ENCODE measurements at regions of chr13 and their contacts with region 1.

Region 1: DNA sequence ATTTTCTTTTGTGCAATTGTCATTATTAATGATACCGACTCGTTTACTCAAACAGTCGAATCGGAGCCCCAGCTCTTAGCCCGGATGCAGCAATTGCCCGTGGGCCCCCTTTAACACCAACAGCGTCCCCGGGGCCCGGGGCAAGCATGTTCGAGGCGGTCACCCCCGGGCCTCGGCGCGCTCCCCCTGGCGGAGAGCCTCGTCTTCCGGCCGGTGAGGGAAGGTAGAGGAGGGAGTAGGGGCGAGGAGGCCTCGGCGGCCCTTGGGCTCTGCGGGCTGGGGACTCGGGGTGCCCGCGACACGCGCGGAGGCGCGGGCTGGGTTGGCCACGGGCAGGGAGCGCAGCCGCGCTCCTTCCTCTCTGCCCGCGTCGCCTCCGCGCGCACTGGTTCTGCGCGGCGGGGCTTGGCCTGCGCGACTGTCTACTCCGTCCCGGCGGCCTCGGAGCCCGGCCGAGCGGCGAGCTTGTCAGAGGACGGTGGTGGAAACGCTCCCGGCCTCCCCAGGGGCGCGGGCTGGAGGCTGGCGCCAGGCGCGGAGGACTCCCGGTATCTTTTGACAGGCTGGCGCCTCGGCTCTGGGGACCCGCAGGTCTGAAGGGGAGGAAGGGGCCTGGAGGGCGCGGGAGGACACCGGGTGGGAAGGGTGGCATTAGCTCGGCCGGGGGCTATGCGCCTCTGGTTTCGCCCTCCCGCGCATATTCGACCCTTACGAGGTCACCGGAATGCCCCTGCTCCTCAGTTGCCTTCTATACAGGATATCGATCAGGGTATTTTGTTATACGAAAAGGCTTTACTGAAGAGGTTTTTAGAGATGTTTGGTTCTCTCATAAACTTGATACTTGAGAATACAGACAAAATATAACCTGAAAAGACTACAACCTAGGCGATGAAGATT is 1.5 kb downstream of the BIVM start:
- DNase-seq: peak; percentile 59 to 81
- H3K4me3 ChIP-seq: peak overlapping the region; percentile 87
- H3K27ac ChIP-seq: no peak overlapping the region
- H3K4me1 ChIP-seq: peaks cover 15% of the 10 kb centered on the region; the same call in 1 of the 2 replicates
- H3K27me3 ChIP-seq: no peaks in the 10 kb centered on the region
- CTCF ChIP-seq: peak; percentile 82

Region 2: GRCh38 chr13:102538938-102539337 is 261.5 kb before region 1 on chr13:
- CTCF ChIA-PET with region 1: no interaction called
- POLR2A ChIA-PET with region 1: no interaction called
- intact Hi-C with region 1: no loop called
- DNase-seq: no peak
- H3K4me3 ChIP-seq: no peak overlapping the region
- H3K27ac ChIP-seq: no peak overlapping the region
- H3K4me1 ChIP-seq: no peaks in the 10 kb centered on the region
- H3K27me3 ChIP-seq: peaks cover 72% of the 10 kb centered on the region
- CTCF ChIP-seq: no peak

Region 3: DNA sequence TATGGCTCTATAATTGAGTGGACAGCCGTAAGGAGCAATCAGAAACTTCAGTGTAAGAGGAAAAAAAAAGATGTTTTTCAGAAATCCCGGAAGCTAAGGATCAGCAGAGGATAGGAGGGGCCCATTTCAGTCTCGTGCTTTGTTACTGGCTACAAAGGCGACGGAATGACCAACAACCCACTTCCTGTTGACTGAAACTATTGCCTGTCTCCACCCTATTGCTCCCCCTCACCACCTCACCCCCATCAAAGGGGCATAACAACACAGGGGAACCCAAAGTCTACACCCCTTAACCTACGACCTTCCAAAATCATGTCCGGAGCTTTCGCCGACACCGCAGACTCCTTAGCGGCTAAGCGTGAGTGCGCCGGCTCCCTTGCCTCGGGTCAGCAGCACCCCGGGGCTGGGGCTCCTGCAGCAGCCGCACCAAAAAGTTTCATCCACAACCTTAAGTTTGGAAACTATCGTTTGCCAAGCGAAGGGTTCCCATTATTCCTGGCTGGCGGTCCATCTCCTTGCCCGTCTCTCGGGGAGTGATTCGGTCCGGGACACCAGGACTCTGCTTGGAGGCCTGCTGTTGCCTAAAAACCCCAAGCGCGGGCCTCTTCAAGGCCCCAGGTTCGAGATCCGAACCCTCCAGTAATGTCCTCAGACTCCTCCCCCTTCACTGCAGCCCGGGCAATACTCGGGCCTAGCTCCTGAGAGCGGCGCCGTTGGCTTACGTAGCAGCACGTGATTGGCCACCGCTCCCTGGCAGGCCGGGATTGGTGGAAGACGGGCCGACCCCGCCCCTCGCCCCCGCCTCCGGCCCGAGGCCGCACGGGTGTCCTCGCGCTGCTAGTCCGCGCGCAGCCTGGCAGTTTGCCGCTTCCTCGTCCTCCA is 204.0 kb before region 1 on chr13 and contains the start of gene TPP2:
- CTCF ChIA-PET with region 1: no interaction called
- POLR2A ChIA-PET with region 1: no interaction called
- intact Hi-C with region 1: loop called (anchors 1 kb)
- DNase-seq: peak; percentile 96 to 99
- H3K4me3 ChIP-seq: peak within 1 kb of the TSS; percentile 93
- H3K27ac ChIP-seq: peak within 1 kb of the TSS; percentile 95
- H3K4me1 ChIP-seq: peaks cover 35% of the 10 kb centered on the region
- H3K27me3 ChIP-seq: no peaks in the 10 kb centered on the region
- CTCF ChIP-seq: no peak
- total RNA-seq, gene TPP2: 33.3 and 35.1 TPM in 2 replicates

Region 4: GRCh38 chr13:102724923-102725322 is 75.5 kb before region 1 on chr13:
- CTCF ChIA-PET with region 1: no interaction called
- POLR2A ChIA-PET with region 1: no interaction called
- intact Hi-C with region 1: loop called (anchors 5 kb)
- DNase-seq: peak; percentile 12 to 87
- H3K4me3 ChIP-seq: no peak overlapping the region
- H3K27ac ChIP-seq: 0 out of 2 replicates have a peak overlapping the region, but pooled peaks have one; percentile 38
- H3K4me1 ChIP-seq: peaks cover 12% of the 10 kb centered on the region
- H3K27me3 ChIP-seq: no peaks in the 10 kb centered on the region
- CTCF ChIP-seq: peak; percentile 78

Region 5: GRCh38 chr13:102773441-102774215 is 26.8 kb before region 1 on chr13 and contains the start of gene TEX30:
- CTCF ChIA-PET with region 1: interaction called, 3 read pairs
- POLR2A ChIA-PET with region 1: no interaction called
- intact Hi-C with region 1: loop called (anchors 2 kb)
- DNase-seq: peak; percentile 64 to 88
- H3K4me3 ChIP-seq: peak within 1 kb of the TSS; percentile 84
- H3K27ac ChIP-seq: 0 out of 2 replicates have a peak within 1 kb of the TSS, but pooled peaks have one; percentile 4
- H3K4me1 ChIP-seq: peaks cover 11% of the 10 kb centered on the region
- H3K27me3 ChIP-seq: no peaks in the 10 kb centered on the region
- CTCF ChIP-seq: no peak
- total RNA-seq, gene TEX30: 9.3 and 13.1 TPM in 2 replicates

Region 6: GRCh38 chr13:102825921-102826706 is 25.7 kb after region 1 on chr13:
- CTCF ChIA-PET with region 1: no interaction called
- POLR2A ChIA-PET with region 1: interaction called, 13 read pairs
- intact Hi-C with region 1: no loop called
- DNase-seq: peak; percentile 5 to 86
- H3K4me3 ChIP-seq: peak overlapping the region; percentile 2; the same call in 1 of the 2 replicates
- H3K27ac ChIP-seq: peak overlapping the region; percentile 59
- H3K4me1 ChIP-seq: peaks cover 17% of the 10 kb centered on the region
- H3K27me3 ChIP-seq: no peaks in the 10 kb centered on the region
- CTCF ChIP-seq: no peak; the same call in 1 of the 2 replicates

Measured in PC-9 (cell line).